Endothelial cell of umbilical vein (primary cell): ENCODE measurements at regions of chr11 and their contacts with region 1.

Region 1: GRCh38 chr11:75406338-75406777 is 7.0 kb downstream of the RPS3 start:
- DNase-seq: peak; percentile 94
- H3K4me3 ChIP-seq: no peak overlapping the region
- H3K27ac ChIP-seq: no peak overlapping the region
- H3K4me1 ChIP-seq: peaks cover 56% of the 10 kb centered on the region
- H3K27me3 ChIP-seq: no peaks in the 10 kb centered on the region
- CTCF ChIP-seq: no peak
- POLR2A ChIP-seq: peak; percentile 77

Region 2: DNA sequence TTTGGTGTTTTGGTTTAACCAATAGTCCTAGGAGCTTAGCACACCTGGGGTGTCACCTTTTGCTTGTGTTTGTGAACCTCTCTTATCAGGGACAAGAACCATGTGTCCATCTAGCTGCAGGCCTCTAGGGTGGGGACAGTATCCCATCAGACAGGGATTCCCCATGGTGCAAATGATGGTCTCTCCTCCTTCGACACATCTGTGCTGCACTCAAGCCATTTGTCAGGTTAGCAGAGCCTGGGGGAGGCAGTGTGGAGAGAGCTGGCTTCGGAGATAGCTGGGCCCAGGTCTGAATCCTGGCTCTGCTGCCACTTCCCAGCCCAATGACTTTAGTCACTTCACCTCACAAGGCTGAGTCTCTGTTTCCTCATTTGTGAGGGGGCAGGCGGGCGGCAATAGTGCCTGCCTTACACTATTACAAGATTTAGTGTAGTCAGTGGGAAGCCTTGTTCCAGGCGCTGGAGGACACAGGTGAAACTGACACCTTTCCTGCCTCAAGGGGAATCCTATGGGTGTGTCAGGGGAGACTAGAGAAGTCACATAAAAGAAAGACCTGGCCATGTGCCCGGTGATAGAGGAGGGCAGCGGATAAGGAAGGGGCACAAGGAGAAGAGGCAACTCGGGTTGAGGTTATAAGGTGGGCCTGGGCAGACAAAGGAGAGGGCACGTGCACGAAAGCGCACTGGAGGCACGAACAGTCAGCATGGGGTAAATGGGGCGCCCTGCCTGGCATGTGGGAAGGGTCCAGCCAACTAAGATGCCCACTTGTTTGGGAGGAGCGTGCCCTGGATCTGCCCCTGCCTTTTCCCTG is 14.1 kb after region 1 on chr11:
- CTCF ChIA-PET with region 1: interaction called, 49 read pairs
- POLR2A ChIA-PET with region 1: interaction called, 4 read pairs
- dilution Hi-C with region 1: no loop called
- intact Hi-C with region 1: no loop called
- DNase-seq: no peak
- H3K4me3 ChIP-seq: no peak overlapping the region
- H3K27ac ChIP-seq: no peak overlapping the region
- H3K4me1 ChIP-seq: peaks cover 23% of the 10 kb centered on the region
- H3K27me3 ChIP-seq: no peaks in the 10 kb centered on the region
- CTCF ChIP-seq: no peak
- POLR2A ChIP-seq: no peak

Region 3: DNA sequence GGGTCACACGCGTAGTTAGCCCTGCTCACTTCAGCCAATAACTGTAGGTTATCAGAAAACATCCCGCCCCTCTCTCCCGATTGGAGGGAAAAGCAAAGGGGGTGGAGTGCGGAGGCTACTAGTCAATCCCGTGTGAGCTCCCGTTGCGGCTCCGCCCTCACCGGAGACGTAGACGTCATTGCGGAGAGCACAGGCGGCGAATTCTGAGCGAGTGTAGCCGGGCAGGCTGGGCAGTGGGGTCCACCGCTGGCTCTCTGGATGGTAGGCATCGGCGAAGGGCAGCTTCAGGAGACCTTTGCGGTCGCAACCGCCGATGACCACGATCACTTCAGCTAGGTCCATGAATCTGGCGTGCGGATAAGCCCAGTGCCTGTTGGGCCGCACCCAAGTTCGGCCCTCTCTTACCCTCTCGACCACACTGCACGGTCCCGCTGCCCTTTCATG is 21.9 kb after region 1 on chr11:
- CTCF ChIA-PET with region 1: interaction called, 12 read pairs
- POLR2A ChIA-PET with region 1: no interaction called
- dilution Hi-C with region 1: no loop called
- intact Hi-C with region 1: no loop called
- DNase-seq: peak; percentile 96
- H3K4me3 ChIP-seq: peak overlapping the region in 1 of 3 experiments; percentile 34
- H3K27ac ChIP-seq: no peak overlapping the region
- H3K4me1 ChIP-seq: peaks cover 9% of the 10 kb centered on the region
- H3K27me3 ChIP-seq: peaks cover 26 to 29% of the 10 kb centered on the region in 2 experiments
- CTCF ChIP-seq: no peak
- POLR2A ChIP-seq: peak; percentile 82

Region 4: DNA sequence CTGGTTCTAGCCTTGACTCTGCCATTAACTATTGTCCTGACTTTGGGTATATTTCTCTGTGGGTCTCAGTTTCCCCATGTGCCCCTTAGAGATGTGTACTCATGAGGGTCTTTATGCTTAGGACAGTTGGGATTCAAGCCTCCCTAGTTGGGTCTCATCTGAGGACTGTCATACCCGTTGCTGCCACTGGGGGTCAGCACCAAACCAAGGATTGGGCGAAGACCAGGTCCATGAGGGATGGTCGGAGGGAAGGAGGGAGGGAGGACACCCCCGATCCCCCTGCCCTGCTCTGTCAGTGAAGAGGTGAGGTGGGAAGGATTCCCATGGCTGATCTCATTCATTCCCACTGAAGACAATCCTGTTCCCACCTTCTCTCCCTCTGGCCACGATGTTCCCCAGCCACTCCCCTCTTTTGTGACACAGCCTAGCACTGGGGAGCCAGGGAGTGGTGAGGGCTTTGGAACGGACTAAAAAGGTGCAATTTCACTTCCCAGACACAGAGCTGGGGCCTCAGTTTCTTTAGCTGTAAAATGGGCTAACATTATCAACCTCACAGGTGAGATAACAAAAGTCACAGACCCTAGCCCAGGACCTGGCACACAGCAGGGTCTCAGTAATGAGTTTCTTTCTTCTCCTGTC is 39.1 kb after region 1 on chr11:
- CTCF ChIA-PET with region 1: interaction called, 11 read pairs
- POLR2A ChIA-PET with region 1: no interaction called
- dilution Hi-C with region 1: no loop called
- intact Hi-C with region 1: loop called (anchors 1 kb)
- DNase-seq: peak; percentile 70
- H3K4me3 ChIP-seq: no peak overlapping the region
- H3K27ac ChIP-seq: no peak overlapping the region
- H3K4me1 ChIP-seq: no peaks in the 10 kb centered on the region
- H3K27me3 ChIP-seq: no peaks in the 10 kb centered on the region
- CTCF ChIP-seq: peak; percentile 85 to 92
- POLR2A ChIP-seq: no peak

Region 5: DNA sequence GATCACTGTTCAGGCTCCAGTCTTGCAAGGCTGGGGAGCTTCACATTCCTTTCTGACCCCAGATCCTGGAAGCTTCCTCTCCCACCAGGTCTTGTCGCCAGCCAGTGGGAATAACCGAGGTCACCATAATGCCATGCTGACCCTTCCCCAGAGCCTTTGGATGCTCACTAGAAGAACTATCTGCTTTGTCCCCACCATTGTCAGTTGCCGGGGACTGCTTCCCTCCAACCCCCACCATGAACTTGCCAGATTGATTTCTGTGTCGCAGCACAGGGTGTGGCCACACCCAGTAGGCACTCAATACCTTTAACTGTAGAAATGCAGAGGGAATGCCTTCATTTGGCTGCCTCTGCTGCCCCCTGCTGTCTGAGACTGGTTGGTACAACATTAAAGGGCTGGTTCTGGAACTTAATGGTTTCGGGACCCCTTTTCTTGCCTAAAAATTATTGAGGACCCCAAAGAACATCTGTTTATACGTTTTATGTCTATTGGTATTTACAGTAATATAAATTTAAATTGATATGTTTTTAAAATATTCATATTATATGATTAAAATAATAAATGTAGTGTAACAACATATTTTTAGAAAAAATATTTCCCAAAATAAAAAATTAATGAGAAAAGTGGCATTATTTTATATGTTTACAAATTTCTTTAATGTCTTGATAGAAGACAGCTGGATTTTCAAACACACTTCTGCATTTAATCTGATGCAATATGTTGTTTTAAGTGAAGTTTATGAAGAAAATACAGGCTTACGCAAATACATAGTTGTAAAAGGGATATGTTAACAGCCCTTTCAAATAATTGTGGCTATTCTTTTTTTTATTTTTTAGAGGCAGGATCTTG is 126.1 kb after region 1 on chr11:
- CTCF ChIA-PET with region 1: interaction called, 12 read pairs
- POLR2A ChIA-PET with region 1: no interaction called
- dilution Hi-C with region 1: no loop called
- intact Hi-C with region 1: loop called (anchors 1 kb)
- DNase-seq: peak; percentile 76
- H3K4me3 ChIP-seq: no peak overlapping the region
- H3K27ac ChIP-seq: no peak overlapping the region
- H3K4me1 ChIP-seq: peaks cover 13% of the 10 kb centered on the region
- H3K27me3 ChIP-seq: no peaks in the 10 kb centered on the region
- CTCF ChIP-seq: peak; percentile 72 to 78
- POLR2A ChIP-seq: no peak